ENCODE measurements at regions of chr6 and their contacts with region 1.

Region 1: DNA sequence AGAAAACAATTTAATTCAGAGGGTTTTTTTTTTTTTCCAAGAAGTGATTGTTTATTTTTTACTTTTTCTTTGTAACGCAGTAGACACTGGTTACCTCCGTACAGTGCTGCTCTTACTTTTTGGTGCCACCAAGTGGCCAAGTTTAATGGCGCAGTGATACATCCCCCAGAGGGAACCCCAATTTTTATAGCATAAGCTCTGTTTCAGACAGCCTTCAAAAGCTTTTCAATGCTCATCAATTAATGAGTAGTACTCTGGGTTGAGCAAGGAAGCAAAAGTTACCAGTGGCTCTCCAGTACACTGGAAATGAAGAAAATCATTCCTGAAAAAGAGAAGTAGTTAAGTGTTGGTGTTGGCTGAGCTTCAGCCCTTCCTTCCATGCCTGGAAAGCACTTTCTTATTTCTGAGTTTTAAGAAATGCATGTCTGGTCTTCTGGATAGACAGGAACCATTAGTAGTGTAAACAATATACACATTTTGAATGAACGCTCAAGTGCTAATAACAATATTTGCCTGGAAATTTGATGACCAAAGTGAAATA is 129.1 kb upstream of the SMLR1 start:
- DNase-seq: peak; percentile 30
- ATAC-seq: peak; percentile 99
- H3K4me3 ChIP-seq: no peak overlapping the region
- H3K27ac ChIP-seq: no peak overlapping the region
- H3K4me1 ChIP-seq: no peaks in the 10 kb centered on the region
- H3K27me3 ChIP-seq: peaks cover 0 to 8% of the 10 kb centered on the region in 2 experiments; a peak in 1 of 5 replicates
- CTCF ChIP-seq: peak; percentile 69
- EP300 ChIP-seq: no peak
- POLR2A ChIP-seq: no peak
- RAD21 ChIP-seq: peak; percentile 33; the same call in 1 of the 2 replicates

Region 2: GRCh38 chr6:130239755-130240154 is 458.3 kb before region 1 on chr6:
- CTCF ChIA-PET with region 1: no interaction called
- POLR2A ChIA-PET with region 1: no interaction called
- in situ Hi-C with region 1: no loop called
- intact Hi-C with region 1: loop called (anchors 5 kb)
- DNase-seq: no peak
- ATAC-seq: no peak
- H3K4me3 ChIP-seq: no peak overlapping the region
- H3K27ac ChIP-seq: no peak overlapping the region
- H3K4me1 ChIP-seq: no peaks in the 10 kb centered on the region
- H3K27me3 ChIP-seq: peaks cover 0 to 2% of the 10 kb centered on the region in 2 experiments; a peak in 1 of 5 replicates
- CTCF ChIP-seq: no peak
- EP300 ChIP-seq: no peak
- POLR2A ChIP-seq: no peak
- RAD21 ChIP-seq: no peak

Region 3: GRCh38 chr6:130322673-130323268 is 375.3 kb before region 1 on chr6:
- CTCF ChIA-PET with region 1: interaction called, 9 read pairs
- POLR2A ChIA-PET with region 1: no interaction called
- in situ Hi-C with region 1: no loop called
- intact Hi-C with region 1: loop called (anchors 1 kb)
- DNase-seq: peak; percentile 55
- ATAC-seq: peak; percentile 77
- H3K4me3 ChIP-seq: no peak overlapping the region
- H3K27ac ChIP-seq: no peak overlapping the region
- H3K4me1 ChIP-seq: no peaks in the 10 kb centered on the region
- H3K27me3 ChIP-seq: no peaks in the 10 kb centered on the region
- CTCF ChIP-seq: peak; percentile 81
- EP300 ChIP-seq: no peak
- POLR2A ChIP-seq: no peak
- RAD21 ChIP-seq: peak; percentile 71

Region 4: DNA sequence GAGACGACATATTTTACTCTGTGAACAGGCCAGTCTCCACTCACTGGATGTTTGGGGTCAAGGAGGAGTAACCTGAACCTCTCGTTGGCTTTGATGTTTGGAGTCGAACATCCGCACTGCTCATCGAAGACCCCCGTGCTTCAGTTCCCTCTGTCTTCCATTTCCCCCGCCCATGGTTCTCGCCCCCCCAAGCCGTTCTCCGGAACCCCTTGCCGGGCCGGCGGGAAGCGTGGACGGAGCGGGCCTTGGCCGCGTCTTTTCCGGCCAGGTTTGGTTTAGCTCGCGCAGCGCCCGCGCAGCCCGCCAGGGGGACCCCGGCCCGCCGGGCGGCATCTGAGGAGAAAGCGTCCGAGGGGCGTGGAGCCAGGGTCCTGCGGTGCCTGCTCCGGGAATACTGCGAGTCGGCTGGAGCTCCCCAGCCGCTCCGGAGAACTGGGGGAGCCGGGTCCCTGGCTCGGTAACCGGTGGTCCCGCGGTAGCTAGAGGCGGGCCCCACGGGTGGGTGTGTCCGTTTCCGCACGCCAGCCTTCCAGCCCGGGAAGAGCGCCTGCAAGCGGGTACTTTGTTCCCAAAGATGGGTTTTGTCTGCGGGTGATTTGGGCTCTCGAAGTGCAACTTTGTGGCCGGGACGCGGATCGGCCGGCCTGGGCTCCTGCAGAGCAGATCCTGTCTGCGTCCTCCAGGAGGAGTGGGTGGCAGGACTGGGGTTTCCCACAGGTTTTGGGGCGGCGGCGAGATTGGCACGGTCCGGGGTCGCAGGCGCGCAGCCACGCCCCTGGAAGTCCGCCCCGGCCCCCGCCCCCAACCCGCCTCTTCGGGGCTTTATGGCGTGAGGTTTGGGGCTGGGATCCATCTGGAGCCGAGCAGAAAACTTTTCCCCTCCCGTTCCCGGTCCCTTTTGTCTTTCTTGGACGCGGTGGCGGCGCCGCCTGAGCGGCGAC is 332.6 kb before region 1 on chr6 and contains the start of gene TMEM200A:
- CTCF ChIA-PET with region 1: interaction called, 5 read pairs
- POLR2A ChIA-PET with region 1: no interaction called
- in situ Hi-C with region 1: no loop called
- intact Hi-C with region 1: loop called (anchors 1 kb)
- DNase-seq: peak; percentile 40
- ATAC-seq: peak; percentile 95
- H3K4me3 ChIP-seq: peak within 1 kb of the TSS; percentile 55 to 73 (median 56)
- H3K27ac ChIP-seq: no peak within 1 kb of the TSS
- H3K4me1 ChIP-seq: peaks cover 9% of the 10 kb centered on the region
- H3K27me3 ChIP-seq: peaks cover 2 to 34% of the 10 kb centered on the region in 2 experiments; a peak in 4 of 5 replicates
- CTCF ChIP-seq: peak; percentile 84
- EP300 ChIP-seq: no peak
- POLR2A ChIP-seq: no peak
- RAD21 ChIP-seq: peak; percentile 85
- total RNA-seq, gene TMEM200A: not detected in 2 replicates

Measured in HepG2 (cell line).